Activated T-helper 1 cell treated with anti-CD3 and anti-CD28 coated beads, Interleukin-12 subunit alpha, Interleukin-12 subunit beta, Interleukin-2, Interleukin-4 antibody, amounts not matched to agents 30 ng/mL and 10 ng/mL and 1 ng/mL, durations not matched to agents 14 hours and 24 hours and 36 hours (primary cell): ENCODE measurements at regions of chr19 and their contacts with region 1.

Region 1: DNA sequence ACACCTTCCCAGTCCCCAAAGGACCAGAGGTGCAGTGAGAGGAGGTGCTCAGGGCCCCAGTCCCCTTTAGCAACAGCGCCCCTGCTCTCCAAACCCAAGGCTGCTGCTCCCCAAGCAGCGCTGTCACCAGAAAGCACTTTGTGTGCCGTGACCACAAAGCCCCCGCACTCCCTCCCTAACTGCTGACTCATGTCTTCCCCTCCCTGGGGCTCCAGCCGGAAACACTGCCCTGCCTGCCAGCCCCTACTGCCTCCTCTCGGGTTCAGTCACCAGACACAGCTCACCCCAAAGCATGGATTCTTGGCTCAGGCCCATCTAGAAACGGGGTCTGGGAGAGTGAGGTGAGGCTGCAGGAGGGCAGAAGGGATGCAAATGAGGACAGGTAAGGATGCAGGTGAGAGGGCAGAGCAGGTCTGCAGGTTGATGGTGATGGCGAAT is 4.9 kb upstream of the TNFSF14 start:
- DNase-seq: peak; percentile 84
- H3K4me3 Mint-ChIP-seq: peak overlapping the region; percentile 70
- H3K27ac Mint-ChIP-seq: peak overlapping the region; percentile 94
- H3K4me1 Mint-ChIP-seq: peaks cover 79% of the 10 kb centered on the region
- H3K27me3 Mint-ChIP-seq: peaks cover 4% of the 10 kb centered on the region

Region 2: GRCh38 chr19:6530386-6531161 is 144.3 kb before region 1 on chr19 and contains the start of gene TNFSF9:
- intact Hi-C with region 1: loop called (anchors 5 kb)
- DNase-seq: peak; percentile 77
- H3K4me3 Mint-ChIP-seq: peak within 1 kb of the TSS; percentile 90
- H3K27ac Mint-ChIP-seq: peak within 1 kb of the TSS; percentile 83
- H3K4me1 Mint-ChIP-seq: peaks cover 39% of the 10 kb centered on the region
- H3K27me3 Mint-ChIP-seq: peaks cover 32% of the 10 kb centered on the region
- total RNA-seq, gene TNFSF9: 8.0 and 9.7 TPM in 2 replicates

Region 3: DNA sequence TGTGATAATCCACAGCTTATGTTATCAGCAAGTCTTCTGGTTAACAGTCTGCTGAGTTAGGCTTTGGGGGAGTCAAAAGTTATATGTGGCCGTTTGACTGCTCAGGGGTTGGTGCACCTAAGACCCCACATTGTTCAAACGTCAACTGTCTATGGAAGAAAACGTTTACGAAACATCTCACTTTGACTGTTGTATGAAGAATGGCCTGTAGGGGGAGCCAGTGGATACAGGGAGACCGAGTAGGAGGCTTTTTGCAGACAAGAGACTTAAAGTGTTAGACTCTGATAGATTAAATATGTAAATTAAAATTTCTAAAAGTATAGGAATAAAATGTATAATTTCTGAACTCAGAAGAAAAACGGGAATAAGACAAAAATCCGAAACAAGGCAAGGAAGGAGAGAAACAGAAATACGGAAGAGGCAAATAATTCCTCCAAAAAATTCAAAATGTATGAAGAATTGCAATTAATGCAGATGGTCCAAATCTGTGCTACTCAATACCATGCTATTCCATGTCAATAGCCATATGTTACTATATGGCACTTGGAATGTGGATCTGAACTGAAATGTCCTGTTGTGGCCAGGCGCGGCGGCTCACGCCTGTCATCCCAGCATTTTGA is 42.8 kb before region 1 on chr19:
- intact Hi-C with region 1: loop called (anchors 1 kb)
- DNase-seq: peak; percentile 76
- H3K4me3 Mint-ChIP-seq: no peak overlapping the region
- H3K27ac Mint-ChIP-seq: no peak overlapping the region
- H3K4me1 Mint-ChIP-seq: peaks cover 29% of the 10 kb centered on the region
- H3K27me3 Mint-ChIP-seq: peaks cover 4% of the 10 kb centered on the region

Region 4: DNA sequence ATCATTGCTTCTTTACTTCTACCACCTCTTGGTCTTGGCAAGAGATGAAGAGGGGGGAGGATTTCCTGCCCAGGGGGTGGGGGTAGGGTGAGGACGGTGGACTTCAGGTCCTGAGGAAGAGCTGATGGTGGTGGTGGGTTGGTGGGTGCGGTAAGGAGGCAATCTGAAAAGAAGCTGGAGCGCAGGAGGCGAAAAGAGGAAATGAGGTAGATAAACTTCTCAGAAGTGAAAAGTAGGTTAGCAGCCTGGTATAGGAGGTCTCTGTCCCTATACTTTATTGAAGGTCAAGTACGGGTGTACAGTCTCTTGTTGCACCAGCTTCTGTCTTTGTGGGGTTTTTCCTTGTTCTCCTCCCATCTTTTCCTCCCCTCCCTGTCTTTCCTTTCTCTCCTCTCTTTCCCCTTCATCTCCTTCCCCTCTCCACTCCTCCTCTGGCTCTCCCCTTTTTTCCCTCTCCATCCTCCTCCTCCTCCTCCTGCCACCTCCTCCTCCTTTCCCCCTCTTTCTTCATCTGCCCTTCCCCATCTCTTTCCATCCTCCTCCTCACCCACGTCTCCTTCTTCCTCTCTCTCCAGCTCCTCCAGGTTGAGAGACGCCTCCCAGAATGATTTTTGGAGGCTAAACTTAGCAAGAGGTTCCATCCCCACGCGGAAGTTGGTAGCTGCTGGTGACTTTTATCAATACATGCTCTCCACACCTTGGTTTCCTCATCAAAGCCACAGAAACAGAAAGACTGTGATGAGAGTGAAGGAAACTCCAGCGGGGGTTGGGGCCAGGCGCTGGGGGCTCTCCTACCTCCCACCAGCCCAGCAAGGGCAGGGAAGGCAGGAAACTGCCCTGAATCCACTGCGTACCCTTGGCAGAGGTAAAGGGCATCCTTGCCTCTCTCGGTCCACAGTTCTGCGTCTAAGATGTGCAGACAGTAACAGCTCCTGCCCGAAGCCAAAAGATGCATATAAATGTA is 20.3 kb before region 1 on chr19:
- intact Hi-C with region 1: loop called (anchors 1 kb)
- DNase-seq: peak; percentile 55
- H3K4me3 Mint-ChIP-seq: peak overlapping the region; percentile 75
- H3K27ac Mint-ChIP-seq: peak overlapping the region; percentile 98
- H3K4me1 Mint-ChIP-seq: peaks cover 76% of the 10 kb centered on the region
- H3K27me3 Mint-ChIP-seq: no peaks in the 10 kb centered on the region

Region 5: DNA sequence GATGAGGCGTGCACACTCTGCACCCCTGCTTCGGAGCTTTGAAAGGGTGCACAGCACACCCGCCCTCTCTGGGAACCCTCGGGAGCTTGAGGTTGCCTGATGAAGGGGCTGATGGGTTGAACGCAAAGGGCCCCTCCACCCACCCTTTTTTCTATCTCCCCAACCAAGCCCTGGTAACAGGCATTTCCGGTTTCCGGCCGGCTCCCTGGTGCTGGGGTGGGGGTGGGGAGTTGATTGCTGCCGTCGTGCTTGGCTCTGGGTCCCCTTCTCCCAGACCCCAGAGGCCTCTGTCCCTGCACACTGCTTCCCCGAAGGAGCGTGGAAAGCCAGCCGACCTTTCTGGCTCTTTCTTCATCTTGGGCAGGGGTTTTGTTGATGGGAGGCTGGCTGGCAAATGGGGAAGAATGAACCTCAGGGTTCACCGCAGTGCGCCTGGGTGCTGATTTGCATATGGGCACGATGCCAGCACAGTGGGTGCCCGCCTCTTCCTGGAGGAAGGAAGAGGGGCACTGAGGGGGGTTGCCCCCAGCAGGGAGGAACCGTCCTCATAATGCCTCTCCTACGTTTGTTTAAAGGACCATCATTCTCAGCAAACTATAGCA is 126.7 kb after region 1 on chr19:
- intact Hi-C with region 1: loop called (anchors 5 kb)
- DNase-seq: peak; percentile 72
- H3K4me3 Mint-ChIP-seq: peak overlapping the region; percentile 92
- H3K27ac Mint-ChIP-seq: peak overlapping the region; percentile 99
- H3K4me1 Mint-ChIP-seq: peaks cover 61% of the 10 kb centered on the region
- H3K27me3 Mint-ChIP-seq: no peaks in the 10 kb centered on the region

Region 6: DNA sequence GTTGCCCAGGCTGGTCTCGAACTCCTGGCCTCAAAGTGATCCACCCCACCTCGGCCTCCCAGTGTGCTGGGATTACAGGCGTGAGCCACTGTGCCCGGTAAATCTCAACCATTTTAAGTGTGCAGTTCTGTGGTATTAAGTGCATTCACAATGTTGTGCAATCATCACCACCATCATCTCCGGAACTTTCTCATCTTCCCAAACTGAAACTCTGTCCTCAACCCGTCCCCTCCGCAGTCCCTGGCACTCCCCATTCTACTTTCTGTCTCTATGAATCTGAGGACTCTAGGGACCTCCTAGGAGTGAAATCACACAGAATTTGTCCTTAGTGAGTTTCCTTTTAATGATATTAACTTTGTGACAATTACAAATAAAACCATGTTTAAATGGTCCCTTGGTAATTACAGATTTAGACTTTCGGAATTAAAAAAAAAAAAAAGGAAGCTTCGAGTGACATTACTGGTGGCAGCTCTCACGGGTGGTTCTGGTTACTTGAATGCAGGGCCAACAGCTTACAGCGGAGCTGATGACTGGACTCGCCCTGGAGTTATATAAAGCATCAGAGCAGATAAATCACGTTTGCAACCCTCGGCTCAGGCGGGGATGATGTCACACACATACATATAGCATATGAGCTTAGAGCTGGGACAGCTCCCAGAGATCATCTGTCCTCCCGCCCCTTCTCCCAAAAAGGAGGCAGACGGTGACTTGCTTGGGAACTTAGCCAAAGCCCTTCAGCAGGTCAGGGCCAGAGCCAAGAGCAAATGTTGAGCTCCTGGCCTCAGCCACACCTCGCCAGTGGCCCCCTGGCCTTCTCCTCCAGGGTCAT is 484.4 kb after region 1 on chr19:
- intact Hi-C with region 1: no loop called
- DNase-seq: no peak
- H3K4me3 Mint-ChIP-seq: no peak overlapping the region
- H3K27ac Mint-ChIP-seq: no peak overlapping the region
- H3K4me1 Mint-ChIP-seq: no peaks in the 10 kb centered on the region
- H3K27me3 Mint-ChIP-seq: no peaks in the 10 kb centered on the region